Activated CD4-positive, alpha-beta T cell treated with anti-CD3 and anti-CD28 coated beads for 36 hours (primary cell): ENCODE measurements at regions of chrX and their contacts with region 1.

Region 1: DNA sequence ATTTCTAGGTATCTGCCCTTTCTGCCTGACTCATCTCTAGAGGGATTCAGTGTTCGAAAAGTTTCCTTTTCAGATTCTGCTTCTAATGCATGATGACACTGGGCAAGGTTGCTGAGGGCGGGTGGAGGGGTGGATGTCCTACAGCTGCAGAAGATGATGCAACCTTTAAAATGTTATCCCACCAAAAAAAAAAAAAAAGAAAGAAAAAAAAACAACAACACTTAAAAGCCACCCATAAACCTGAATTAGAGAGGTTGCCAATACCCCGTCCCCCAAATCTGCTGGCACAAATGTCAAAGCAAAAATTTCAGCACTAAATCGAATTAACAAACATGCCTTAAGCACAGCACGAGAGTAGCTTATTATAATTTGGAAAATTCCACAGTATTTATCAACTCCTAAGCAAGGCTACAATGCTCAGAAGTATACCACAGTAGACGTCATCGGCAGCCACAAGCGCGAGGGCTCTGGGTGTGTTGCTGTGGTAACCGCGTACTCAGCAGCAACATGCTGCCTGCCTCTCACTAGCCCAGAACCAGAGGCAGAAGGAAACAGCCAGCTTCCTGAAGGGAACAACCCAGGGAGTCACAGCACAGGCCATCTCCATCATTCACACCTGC is 167.5 kb upstream of the MAP3K15 start:
- DNase-seq: peak; percentile 87
- ATAC-seq: peak; percentile 82
- H3K4me3 Mint-ChIP-seq: peak overlapping the region; percentile 64
- H3K27ac Mint-ChIP-seq: peak overlapping the region; percentile 95
- H3K4me1 Mint-ChIP-seq: peaks cover 85% of the 10 kb centered on the region
- H3K27me3 Mint-ChIP-seq: no peaks in the 10 kb centered on the region

Region 2: DNA sequence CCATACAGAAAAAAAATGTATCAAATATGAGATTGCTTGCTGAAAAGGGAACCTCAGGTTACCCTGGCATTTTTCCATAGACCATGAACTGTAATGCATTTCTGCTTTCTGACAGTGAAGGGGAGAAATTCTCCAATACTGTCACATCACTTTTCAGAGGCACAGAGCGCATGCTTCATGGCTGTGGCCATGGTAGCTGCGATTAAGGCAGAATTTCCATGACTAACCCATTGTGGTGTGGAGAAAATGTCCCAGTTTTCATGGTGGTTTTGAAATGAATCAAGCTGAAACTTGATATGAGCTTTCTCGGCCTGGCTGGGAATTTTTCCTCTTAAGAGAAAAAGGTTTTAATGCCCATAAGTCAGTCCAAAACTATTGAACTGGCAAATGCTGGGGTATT is 128.0 kb before region 1 on chrX:
- CTCF ChIA-PET with region 1: no interaction called
- POLR2A ChIA-PET with region 1: no interaction called
- intact Hi-C with region 1: loop called (anchors 2 to 5 kb)
- DNase-seq: peak; percentile 59
- ATAC-seq: peak; percentile 72
- H3K4me3 Mint-ChIP-seq: no peak overlapping the region
- H3K27ac Mint-ChIP-seq: peak overlapping the region; percentile 79
- H3K4me1 Mint-ChIP-seq: peaks cover 54% of the 10 kb centered on the region
- H3K27me3 Mint-ChIP-seq: no peaks in the 10 kb centered on the region

Region 3: GRCh38 chrX:19566359-19567222 is 116.2 kb before region 1 on chrX:
- CTCF ChIA-PET with region 1: interaction called, 3 read pairs
- POLR2A ChIA-PET with region 1: no interaction called
- intact Hi-C with region 1: loop called in 1 of 2 experiments (anchors 5 kb)
- DNase-seq: peak; percentile 55
- ATAC-seq: peak; percentile 84
- H3K4me3 Mint-ChIP-seq: peak overlapping the region; percentile 51
- H3K27ac Mint-ChIP-seq: peak overlapping the region; percentile 96
- H3K4me1 Mint-ChIP-seq: peaks cover 70% of the 10 kb centered on the region
- H3K27me3 Mint-ChIP-seq: no peaks in the 10 kb centered on the region

Region 4: DNA sequence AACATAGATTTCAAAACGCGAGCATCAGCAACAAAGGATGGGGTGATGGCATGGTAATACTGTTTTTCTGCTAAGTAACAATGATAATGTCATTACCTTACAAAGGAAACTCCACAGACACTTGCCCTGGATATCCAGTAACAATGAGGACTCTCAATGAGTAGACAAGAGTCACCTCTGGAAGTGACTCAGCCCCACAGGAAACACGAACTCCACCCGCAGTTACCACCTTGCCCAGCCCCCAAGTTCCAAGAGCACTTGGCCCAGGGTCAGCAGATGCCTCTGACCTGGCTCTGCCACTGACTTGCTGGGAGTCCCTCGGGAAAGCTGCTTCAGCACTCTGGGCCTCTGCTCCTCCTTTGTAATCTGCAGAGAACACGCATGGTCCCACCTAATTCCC is 57.2 kb before region 1 on chrX:
- CTCF ChIA-PET with region 1: no interaction called
- POLR2A ChIA-PET with region 1: no interaction called
- intact Hi-C with region 1: loop called in 1 of 2 experiments (anchors 2 kb)
- DNase-seq: peak; percentile 59
- ATAC-seq: peak; percentile 86
- H3K4me3 Mint-ChIP-seq: no peak overlapping the region
- H3K27ac Mint-ChIP-seq: peak overlapping the region; percentile 88
- H3K4me1 Mint-ChIP-seq: peaks cover 71% of the 10 kb centered on the region
- H3K27me3 Mint-ChIP-seq: no peaks in the 10 kb centered on the region

Region 5: DNA sequence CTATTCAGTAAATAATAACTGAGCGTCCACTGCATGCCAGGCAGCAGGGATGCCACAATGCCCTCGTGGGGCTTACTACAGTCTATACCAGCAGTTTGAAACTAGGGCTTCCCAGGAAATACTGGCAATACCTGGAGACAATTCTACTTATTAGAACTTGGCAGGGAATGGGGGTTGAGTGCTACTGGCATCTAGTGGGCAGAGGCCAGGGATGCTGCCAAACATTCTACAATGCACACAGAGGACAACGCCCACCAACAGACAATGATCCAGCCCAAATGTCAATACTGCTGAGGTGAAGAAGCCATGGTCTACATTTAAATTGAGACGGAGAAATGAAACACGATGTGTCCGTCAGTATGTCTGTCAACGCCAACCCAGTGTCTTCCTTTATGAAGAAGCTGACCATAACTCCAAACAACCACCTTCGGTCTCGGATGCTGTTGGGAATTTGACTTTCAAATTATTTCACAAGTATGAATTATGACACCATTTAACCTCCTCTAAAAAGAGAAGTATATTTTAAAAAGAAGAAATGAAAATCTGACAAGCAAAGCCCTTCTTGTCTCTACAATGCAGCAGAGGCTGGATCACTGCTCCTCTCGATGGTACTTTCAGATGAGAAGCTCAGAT is 43.9 kb before region 1 on chrX:
- CTCF ChIA-PET with region 1: no interaction called
- POLR2A ChIA-PET with region 1: no interaction called
- intact Hi-C with region 1: no loop called
- DNase-seq: no peak
- ATAC-seq: no peak
- H3K4me3 Mint-ChIP-seq: no peak overlapping the region
- H3K27ac Mint-ChIP-seq: no peak overlapping the region
- H3K4me1 Mint-ChIP-seq: peaks cover 37% of the 10 kb centered on the region
- H3K27me3 Mint-ChIP-seq: no peaks in the 10 kb centered on the region

Region 6: GRCh38 chrX:19747652-19748610 is 65.1 kb after region 1 on chrX:
- CTCF ChIA-PET with region 1: interaction called, 4 read pairs
- POLR2A ChIA-PET with region 1: no interaction called
- intact Hi-C with region 1: loop called (anchors 2 to 5 kb)
- DNase-seq: peak; percentile 82
- ATAC-seq: peak; percentile 78
- H3K4me3 Mint-ChIP-seq: peak overlapping the region; percentile 57
- H3K27ac Mint-ChIP-seq: peak overlapping the region; percentile 95
- H3K4me1 Mint-ChIP-seq: peaks cover 91% of the 10 kb centered on the region
- H3K27me3 Mint-ChIP-seq: no peaks in the 10 kb centered on the region

Region 7: GRCh38 chrX:19799319-19800182 is 116.7 kb after region 1 on chrX:
- CTCF ChIA-PET with region 1: no interaction called
- POLR2A ChIA-PET with region 1: no interaction called
- intact Hi-C with region 1: loop called in 1 of 2 experiments (anchors 5 kb)
- DNase-seq: peak; percentile 65
- ATAC-seq: peak; percentile 78
- H3K4me3 Mint-ChIP-seq: peak overlapping the region; percentile 84
- H3K27ac Mint-ChIP-seq: peak overlapping the region; percentile 98
- H3K4me1 Mint-ChIP-seq: peaks cover 66% of the 10 kb centered on the region
- H3K27me3 Mint-ChIP-seq: no peaks in the 10 kb centered on the region

Region 8: DNA sequence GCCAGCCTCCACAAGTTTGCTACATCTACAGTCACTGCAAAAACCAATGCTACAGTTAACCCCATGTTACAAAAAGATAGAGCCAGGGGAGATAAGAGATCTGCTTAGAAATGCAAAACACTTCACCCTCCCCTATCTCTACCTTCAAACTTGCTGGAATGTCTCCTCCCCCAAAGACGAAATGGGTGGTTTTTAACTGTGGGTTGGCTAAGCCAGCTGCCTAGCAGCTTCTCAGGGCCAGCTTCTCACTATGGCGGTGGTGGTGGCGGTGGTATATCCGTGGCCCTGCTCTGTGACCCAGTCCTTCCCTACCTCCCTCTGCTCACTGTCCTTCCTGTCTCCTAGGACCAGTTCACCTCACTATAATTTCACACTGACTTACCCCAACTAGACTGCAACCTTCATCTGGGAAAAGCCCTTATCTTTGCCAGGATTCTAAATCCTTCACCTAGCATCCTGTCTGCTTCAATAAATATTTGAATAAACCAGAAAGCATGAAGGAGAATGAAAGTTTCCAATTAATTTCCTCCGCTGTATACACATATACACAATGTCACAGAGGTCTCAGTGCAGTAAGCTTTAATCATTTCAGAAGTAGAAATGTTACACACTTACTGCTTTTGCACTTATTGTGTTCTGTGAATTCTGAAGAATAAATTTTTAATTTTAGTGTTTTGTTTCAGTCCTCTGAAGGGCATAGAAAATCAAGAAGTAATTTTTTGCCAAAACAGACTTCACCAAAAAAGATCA is 158.3 kb after region 1 on chrX:
- CTCF ChIA-PET with region 1: no interaction called
- POLR2A ChIA-PET with region 1: no interaction called
- intact Hi-C with region 1: loop called (anchors 2 to 5 kb)
- DNase-seq: peak; percentile 63
- ATAC-seq: peak; percentile 69
- H3K4me3 Mint-ChIP-seq: peak overlapping the region; percentile 55
- H3K27ac Mint-ChIP-seq: peak overlapping the region; percentile 97
- H3K4me1 Mint-ChIP-seq: peaks cover 84% of the 10 kb centered on the region
- H3K27me3 Mint-ChIP-seq: no peaks in the 10 kb centered on the region